Caco-2 (cell line): ENCODE measurements at regions of chr10 and their contacts with region 1.

Region 1: GRCh38 chr10:24209946-24210491 is 1.1 kb downstream of the KIAA1217 start:
- DNase-seq: peak in 1 of 2 experiments; percentile 19
- H3K4me3 ChIP-seq: peak overlapping the region; percentile 65
- H3K4me3 Mint-ChIP-seq: peak overlapping the region; percentile 91
- H3K27ac Mint-ChIP-seq: peak overlapping the region; percentile 93
- H3K4me1 ChIP-seq: peaks cover 56% of the 10 kb centered on the region
- H3K4me1 Mint-ChIP-seq: peaks cover 69% of the 10 kb centered on the region
- H3K27me3 ChIP-seq: no peaks in the 10 kb centered on the region
- H3K27me3 Mint-ChIP-seq: no peaks in the 10 kb centered on the region
- CTCF ChIP-seq: no peak

Region 2: DNA sequence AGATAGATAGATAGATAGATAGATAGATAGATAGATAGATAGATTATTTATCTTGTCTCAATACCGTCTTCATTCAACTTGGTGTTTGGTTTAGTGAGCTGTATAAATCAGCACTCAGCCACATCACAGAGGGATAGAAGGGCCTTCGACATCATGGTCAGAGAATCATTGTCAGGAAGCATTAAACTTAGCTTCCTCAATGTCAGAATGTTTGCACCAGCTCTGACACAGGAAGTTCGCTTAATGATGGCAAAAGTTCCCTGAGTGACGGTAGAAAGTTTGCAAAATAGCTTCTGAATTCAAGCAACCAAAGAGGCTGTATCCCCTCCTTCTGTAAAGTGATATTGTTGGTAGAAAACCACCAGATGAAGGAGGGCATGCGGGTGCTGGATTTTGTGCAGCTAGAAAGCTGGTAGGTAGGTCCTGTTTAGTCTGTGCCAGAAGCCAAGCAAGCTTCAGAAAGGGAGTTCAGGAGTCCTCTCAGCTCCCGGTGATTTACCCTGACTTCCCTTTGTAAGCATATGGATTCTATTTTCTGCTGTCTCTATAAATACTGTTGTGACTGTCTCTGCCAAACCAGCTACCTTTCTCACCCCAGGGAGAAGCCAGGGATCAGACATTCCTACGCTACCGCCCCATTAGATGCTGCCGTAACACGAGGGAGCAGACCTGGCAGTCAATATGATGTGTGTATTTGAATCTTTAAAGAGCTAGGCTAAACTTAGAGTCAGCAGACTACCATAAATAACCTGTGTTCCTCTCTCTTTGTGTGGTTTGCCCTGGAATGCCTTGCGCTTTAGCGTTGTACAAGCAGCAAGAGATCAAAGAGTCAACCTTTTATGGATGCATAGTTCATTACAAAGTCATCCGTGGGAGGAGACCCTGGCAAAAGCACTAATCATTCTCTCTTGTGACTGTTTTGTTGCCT is 201.6 kb before region 1 on chr10:
- CTCF ChIA-PET with region 1: no interaction called
- POLR2A ChIA-PET with region 1: no interaction called
- intact Hi-C with region 1: loop called (anchors 5 kb)
- DNase-seq: peak; percentile 77
- H3K4me3 ChIP-seq: no peak overlapping the region
- H3K4me3 Mint-ChIP-seq: peak overlapping the region; percentile 64
- H3K27ac Mint-ChIP-seq: peak overlapping the region; percentile 82
- H3K4me1 ChIP-seq: peaks cover 25% of the 10 kb centered on the region
- H3K4me1 Mint-ChIP-seq: peaks cover 22% of the 10 kb centered on the region
- H3K27me3 ChIP-seq: no peaks in the 10 kb centered on the region
- H3K27me3 Mint-ChIP-seq: no peaks in the 10 kb centered on the region
- CTCF ChIP-seq: no peak

Region 3: GRCh38 chr10:24249829-24250415 is 39.9 kb after region 1 on chr10:
- CTCF ChIA-PET with region 1: interaction called, 7 read pairs
- POLR2A ChIA-PET with region 1: interaction called, 8 read pairs
- intact Hi-C with region 1: loop called (anchors 5 kb)
- DNase-seq: peak in 1 of 2 experiments; percentile 43
- H3K4me3 ChIP-seq: no peak overlapping the region
- H3K4me3 Mint-ChIP-seq: no peak overlapping the region
- H3K27ac Mint-ChIP-seq: peak overlapping the region; percentile 55
- H3K4me1 ChIP-seq: peaks cover 53% of the 10 kb centered on the region
- H3K4me1 Mint-ChIP-seq: peaks cover 37% of the 10 kb centered on the region
- H3K27me3 ChIP-seq: no peaks in the 10 kb centered on the region
- H3K27me3 Mint-ChIP-seq: no peaks in the 10 kb centered on the region
- CTCF ChIP-seq: no peak

Region 4: DNA sequence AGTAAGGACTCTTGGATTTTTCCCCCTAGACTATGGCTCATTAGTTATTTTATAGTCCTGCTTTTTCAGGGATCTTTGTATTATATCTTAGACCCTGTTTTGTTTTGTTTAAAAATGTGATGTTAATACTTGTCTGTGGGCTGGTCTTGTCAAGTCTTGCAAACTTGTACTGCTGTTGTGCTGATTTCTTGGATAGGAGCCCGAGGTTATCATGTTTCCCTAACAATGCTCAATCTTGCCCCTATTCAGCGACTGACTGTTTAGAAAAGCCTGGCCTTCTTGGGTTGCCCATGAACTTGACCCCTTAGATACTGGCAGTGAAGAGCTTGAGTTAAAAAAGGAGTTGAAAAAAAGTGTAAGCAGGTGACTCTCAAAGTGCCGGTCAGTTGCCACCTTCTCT is 114.6 kb after region 1 on chr10:
- CTCF ChIA-PET with region 1: no interaction called
- POLR2A ChIA-PET with region 1: no interaction called
- intact Hi-C with region 1: loop called (anchors 1 kb)
- DNase-seq: no peak
- H3K4me3 ChIP-seq: no peak overlapping the region
- H3K4me3 Mint-ChIP-seq: no peak overlapping the region
- H3K27ac Mint-ChIP-seq: no peak overlapping the region
- H3K4me1 ChIP-seq: no peaks in the 10 kb centered on the region
- H3K4me1 Mint-ChIP-seq: peaks cover 5% of the 10 kb centered on the region
- H3K27me3 ChIP-seq: no peaks in the 10 kb centered on the region
- H3K27me3 Mint-ChIP-seq: no peaks in the 10 kb centered on the region
- CTCF ChIP-seq: no peak

Region 5: GRCh38 chr10:24465891-24466818 is 256.1 kb after region 1 on chr10:
- CTCF ChIA-PET with region 1: no interaction called
- POLR2A ChIA-PET with region 1: no interaction called
- intact Hi-C with region 1: loop called (anchors 2 kb)
- DNase-seq: peak; percentile 78
- H3K4me3 ChIP-seq: peak overlapping the region; percentile 37
- H3K4me3 Mint-ChIP-seq: peak overlapping the region; percentile 73
- H3K27ac Mint-ChIP-seq: peak overlapping the region; percentile 71
- H3K4me1 ChIP-seq: peaks cover 52% of the 10 kb centered on the region
- H3K4me1 Mint-ChIP-seq: peaks cover 66% of the 10 kb centered on the region
- H3K27me3 ChIP-seq: no peaks in the 10 kb centered on the region
- H3K27me3 Mint-ChIP-seq: no peaks in the 10 kb centered on the region
- CTCF ChIP-seq: no peak

Region 6: GRCh38 chr10:24724381-24725228 is 514.6 kb after region 1 on chr10:
- CTCF ChIA-PET with region 1: no interaction called
- POLR2A ChIA-PET with region 1: no interaction called
- intact Hi-C with region 1: loop called (anchors 5 kb)
- DNase-seq: peak; percentile 99 to 100
- H3K4me3 ChIP-seq: peak overlapping the region; percentile 85
- H3K4me3 Mint-ChIP-seq: no peak overlapping the region
- H3K27ac Mint-ChIP-seq: peak overlapping the region; percentile 86
- H3K4me1 ChIP-seq: peaks cover 8% of the 10 kb centered on the region
- H3K4me1 Mint-ChIP-seq: peaks cover 21% of the 10 kb centered on the region
- H3K27me3 ChIP-seq: no peaks in the 10 kb centered on the region
- H3K27me3 Mint-ChIP-seq: no peaks in the 10 kb centered on the region
- CTCF ChIP-seq: no peak